Activated CD4-positive, alpha-beta T cell treated with anti-CD3 and anti-CD28 coated beads, Interleukin-2, amount 10 ng/mL, durations not matched to agents 24 days and 14 days (primary cell): ENCODE measurements at regions of chr15 and their contacts with region 1.

Region 1: GRCh38 chr15:80970018-80970658 is 19.5 kb downstream of the MESD start:
- DNase-seq: peak; percentile 88
- H3K4me3 Mint-ChIP-seq: no peak overlapping the region
- H3K27ac Mint-ChIP-seq: no peak overlapping the region
- H3K4me1 Mint-ChIP-seq: peaks cover 6% of the 10 kb centered on the region
- H3K27me3 Mint-ChIP-seq: no peaks in the 10 kb centered on the region

Region 2: DNA sequence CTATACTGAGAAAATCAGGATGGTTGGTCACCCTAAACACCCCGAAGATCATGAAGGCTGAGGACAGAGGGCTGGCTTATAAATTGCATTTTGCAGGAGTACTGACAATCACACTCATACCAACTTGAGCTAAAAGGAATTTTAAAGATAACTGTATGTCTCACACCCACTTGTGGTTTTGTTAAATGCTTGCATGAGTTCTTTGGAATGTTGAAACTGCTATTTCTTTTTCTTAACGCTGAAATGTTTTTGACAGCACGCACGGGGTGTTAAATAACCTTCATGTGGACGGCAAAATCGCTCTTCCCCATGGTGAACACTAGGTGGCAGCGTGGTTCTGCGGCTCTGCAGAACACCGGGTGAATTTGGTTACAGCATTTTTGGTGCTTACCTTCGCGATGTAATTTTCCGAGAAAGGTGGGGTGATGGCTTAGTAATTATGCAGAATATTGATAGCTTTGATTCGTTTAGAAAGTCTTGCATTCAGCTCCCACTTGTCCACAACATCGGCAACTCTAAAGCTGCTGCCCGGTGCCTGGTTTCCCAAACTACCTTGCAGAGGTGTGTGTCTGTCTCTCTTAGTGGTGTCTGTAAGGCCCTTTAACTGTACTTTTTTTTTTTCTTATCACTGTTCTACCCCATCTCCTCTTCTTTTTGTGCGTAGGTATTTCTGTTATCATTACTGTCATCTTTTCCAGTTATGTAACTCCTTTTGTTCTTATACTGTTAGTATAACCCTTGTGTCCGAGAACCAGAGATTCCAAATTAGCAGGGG is 514.3 kb before region 1 on chr15:
- intact Hi-C with region 1: loop called (anchors 1 kb)
- DNase-seq: peak; percentile 85
- H3K4me3 Mint-ChIP-seq: no peak overlapping the region
- H3K27ac Mint-ChIP-seq: no peak overlapping the region
- H3K4me1 Mint-ChIP-seq: peaks cover 4% of the 10 kb centered on the region
- H3K27me3 Mint-ChIP-seq: peaks cover 15% of the 10 kb centered on the region

Region 3: GRCh38 chr15:80567721-80568157 is 402.4 kb before region 1 on chr15:
- intact Hi-C with region 1: loop called (anchors 5 kb)
- DNase-seq: peak; percentile 66
- H3K4me3 Mint-ChIP-seq: no peak overlapping the region
- H3K27ac Mint-ChIP-seq: no peak overlapping the region
- H3K4me1 Mint-ChIP-seq: no peaks in the 10 kb centered on the region
- H3K27me3 Mint-ChIP-seq: peaks cover 10% of the 10 kb centered on the region